MCF 10A (cell line): ENCODE measurements at regions of chr1 and their contacts with region 1.

Region 1: GRCh38 chr1:88736639-88737248 is 52.7 kb downstream of the PKN2 start:
- DNase-seq: peak; percentile 60
- H3K4me3 Mint-ChIP-seq: no peak overlapping the region
- H3K27ac Mint-ChIP-seq: no peak overlapping the region
- H3K4me1 Mint-ChIP-seq: no peaks in the 10 kb centered on the region
- H3K27me3 Mint-ChIP-seq: no peaks in the 10 kb centered on the region
- CTCF ChIP-seq: peak; percentile 83

Region 2: DNA sequence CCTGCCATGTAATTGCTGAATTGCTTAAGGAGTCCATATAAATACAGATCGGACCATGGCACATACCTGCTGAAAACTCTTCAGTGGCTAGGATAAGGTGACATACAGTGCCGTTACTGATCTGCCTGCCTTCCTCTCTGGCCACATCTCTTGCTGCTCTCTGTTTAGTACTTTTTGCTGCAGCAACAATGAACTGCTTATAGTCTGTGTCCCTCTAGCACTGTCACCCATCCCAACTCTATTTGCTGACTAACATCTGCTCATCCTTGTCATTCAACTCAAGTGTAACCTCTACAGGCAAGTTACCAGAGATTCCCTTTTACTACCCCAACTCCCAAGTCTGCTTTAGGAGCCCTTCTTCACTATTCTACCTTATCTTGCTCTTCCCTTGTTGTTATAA is 89.0 kb after region 1 on chr1:
- CTCF ChIA-PET with region 1: interaction called, 3 read pairs
- POLR2A ChIA-PET with region 1: no interaction called
- intact Hi-C with region 1: loop called (anchors 10 kb)
- DNase-seq: no peak
- H3K4me3 Mint-ChIP-seq: no peak overlapping the region
- H3K27ac Mint-ChIP-seq: no peak overlapping the region
- H3K4me1 Mint-ChIP-seq: no peaks in the 10 kb centered on the region
- H3K27me3 Mint-ChIP-seq: no peaks in the 10 kb centered on the region
- CTCF ChIP-seq: no peak

Region 3: DNA sequence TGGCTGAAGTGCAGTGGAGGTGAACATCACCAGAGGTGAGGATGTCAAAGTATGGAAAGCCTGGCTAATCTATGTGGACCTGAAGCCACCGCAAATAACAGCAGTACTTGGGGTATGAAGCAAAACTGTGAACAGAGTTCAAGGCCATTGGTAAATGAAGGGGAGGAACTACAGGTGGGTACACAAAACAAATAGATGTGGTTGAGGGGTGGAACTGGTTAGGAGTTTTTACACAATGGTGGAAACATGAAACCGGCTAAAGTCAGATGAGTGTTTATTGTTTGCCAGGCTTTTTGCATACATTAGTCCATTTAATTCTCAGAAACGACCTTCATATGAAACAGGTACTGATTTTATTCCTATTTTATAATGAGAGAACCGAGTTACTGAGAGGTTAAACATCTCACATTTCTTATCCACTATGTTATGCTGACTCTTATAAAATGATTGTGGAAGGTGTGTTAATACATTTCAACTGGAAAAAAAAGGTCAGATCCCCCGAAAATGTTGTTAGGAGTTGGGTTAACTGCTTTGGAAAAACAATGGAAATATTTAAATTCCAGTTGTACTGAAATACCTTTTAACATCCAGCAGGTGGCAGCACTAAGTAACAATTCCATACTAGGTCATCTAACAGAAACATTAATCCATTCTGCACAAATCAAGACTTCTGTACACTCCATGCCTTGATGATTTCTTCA is 198.9 kb after region 1 on chr1:
- CTCF ChIA-PET with region 1: interaction called, 3 read pairs
- POLR2A ChIA-PET with region 1: no interaction called
- intact Hi-C with region 1: loop called (anchors 5 kb)
- DNase-seq: peak; percentile 58
- H3K4me3 Mint-ChIP-seq: no peak overlapping the region
- H3K27ac Mint-ChIP-seq: peak overlapping the region; percentile 49
- H3K4me1 Mint-ChIP-seq: no peaks in the 10 kb centered on the region
- H3K27me3 Mint-ChIP-seq: no peaks in the 10 kb centered on the region
- CTCF ChIP-seq: peak; percentile 52